Mucosa of descending colon (tissue), 3 donors: ENCODE measurements at regions of chr2 and their contacts with region 1.

Region 1: DNA sequence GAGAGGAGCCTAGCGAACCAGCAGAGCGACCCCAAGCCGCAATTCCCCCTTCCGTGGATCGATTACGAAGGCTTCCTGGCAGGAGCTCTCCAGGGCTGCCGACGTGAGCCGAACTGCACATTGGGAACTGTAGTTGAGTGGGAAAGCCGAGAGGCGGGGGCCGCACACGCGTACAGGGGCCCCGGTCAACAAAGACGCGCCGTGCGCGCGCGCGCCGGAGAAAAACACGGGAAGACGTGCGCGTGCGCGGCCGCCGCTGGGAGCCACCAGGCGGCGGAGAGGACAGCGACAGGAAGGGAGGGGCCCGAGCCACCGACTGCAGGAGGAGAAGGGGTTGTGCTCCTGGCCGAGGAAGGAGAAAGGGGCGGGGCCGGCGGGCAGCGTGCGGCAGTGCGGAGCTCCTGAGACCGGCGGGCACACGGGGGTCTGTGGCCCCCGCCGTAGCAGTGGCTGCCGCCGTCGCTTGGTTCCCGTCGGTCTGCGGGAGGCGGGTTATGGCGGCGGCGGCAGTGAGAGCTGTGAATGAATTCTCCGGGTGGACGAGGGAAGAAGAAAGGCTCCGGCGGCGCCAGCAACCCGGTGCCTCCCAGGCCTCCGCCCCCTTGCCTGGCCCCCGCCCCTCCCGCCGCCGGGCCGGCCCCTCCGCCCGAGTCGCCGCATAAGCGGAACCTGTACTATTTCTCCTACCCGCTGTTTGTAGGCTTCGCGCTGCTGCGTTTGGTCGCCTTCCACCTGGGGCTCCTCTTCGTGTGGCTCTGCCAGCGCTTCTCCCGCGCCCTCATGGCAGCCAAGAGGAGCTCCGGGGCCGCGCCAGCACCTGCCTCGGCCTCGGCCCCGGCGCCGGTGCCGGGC is at the start of gene SPAST:
- DNase-seq: peak; percentile 98 to 99 (median 99)
- ATAC-seq: peak; percentile 96
- H3K4me3 ChIP-seq: peak within 1 kb of the TSS; percentile 63
- H3K4me1 ChIP-seq: peaks cover 5% of the 10 kb centered on the region
- CTCF ChIP-seq: peak; percentile 47
- total RNA-seq, gene SPAST: 17.2 to 18.9 (median 17.2) TPM

Region 2: GRCh38 chr2:32010670-32011484 is 52.7 kb before region 1 on chr2 and contains the start of gene MEMO1:
- intact Hi-C with region 1: no loop called
- DNase-seq: peak; percentile 96 to 98 (median 97)
- ATAC-seq: peak; percentile 88
- H3K4me3 ChIP-seq: peak within 1 kb of the TSS; percentile 70
- H3K4me1 ChIP-seq: peaks cover 21% of the 10 kb centered on the region
- CTCF ChIP-seq: no peak
- total RNA-seq, gene MEMO1: 28.6 to 46.4 (median 29.2) TPM

Region 3: DNA sequence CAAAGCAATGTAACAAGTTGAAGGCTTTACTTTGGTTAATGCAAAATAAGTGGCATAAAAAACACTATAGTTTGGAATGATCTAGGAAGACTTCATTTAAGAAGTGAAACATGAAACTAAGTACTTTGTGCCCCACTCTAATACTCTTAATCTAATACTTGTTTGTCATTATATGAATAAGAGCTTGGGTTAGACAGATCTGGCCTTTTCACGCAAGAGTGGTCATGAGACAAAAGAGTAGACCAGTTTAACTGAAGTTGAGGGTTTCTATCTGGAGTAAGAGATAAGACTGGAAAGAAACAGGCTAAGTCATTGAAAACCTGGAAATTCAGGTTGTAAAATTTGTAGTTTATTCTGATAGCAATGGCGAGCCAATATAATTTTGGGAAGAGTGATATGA is 105.0 kb after region 1 on chr2:
- intact Hi-C with region 1: loop called in 1 of 2 experiments (anchors 2 kb)
- DNase-seq: no peak
- ATAC-seq: no peak
- H3K4me3 ChIP-seq: no peak overlapping the region
- H3K4me1 ChIP-seq: peaks cover 11% of the 10 kb centered on the region
- CTCF ChIP-seq: no peak